HepG2 (cell line): ENCODE measurements at regions of chr22 and their contacts with region 1.

Region 1: DNA sequence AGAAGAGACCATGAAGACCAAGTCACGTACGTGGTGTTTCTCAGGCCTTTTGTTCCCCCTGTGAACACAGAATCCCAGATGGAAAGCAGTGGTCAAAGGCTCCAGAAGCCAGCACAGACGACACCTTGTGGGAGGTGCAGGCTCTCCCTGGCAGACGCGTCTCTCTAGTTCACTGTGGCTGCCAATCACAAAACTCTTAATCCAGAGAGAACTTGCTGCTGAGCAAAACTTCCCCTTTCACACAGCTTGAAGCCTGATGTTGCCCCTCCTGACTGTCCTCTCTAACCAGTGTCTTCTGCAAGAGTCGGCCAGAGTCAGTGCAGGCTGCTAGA is 67.1 kb downstream of the PIWIL3 start:
- DNase-seq: no peak
- ATAC-seq: peak; percentile 66
- H3K4me3 ChIP-seq: no peak overlapping the region
- H3K27ac ChIP-seq: no peak overlapping the region
- H3K4me1 ChIP-seq: peaks cover 17% of the 10 kb centered on the region
- H3K27me3 ChIP-seq: peaks cover 0 to 10% of the 10 kb centered on the region in 2 experiments; a peak in 2 of 5 replicates
- CTCF ChIP-seq: peak; percentile 52
- EP300 ChIP-seq: no peak
- POLR2A ChIP-seq: no peak
- RAD21 ChIP-seq: no peak

Region 2: GRCh38 chr22:24751518-24751917 is 44.1 kb after region 1 on chr22:
- CTCF ChIA-PET with region 1: interaction called, 4 read pairs
- POLR2A ChIA-PET with region 1: no interaction called
- in situ Hi-C with region 1: loop called (anchors 5 kb)
- intact Hi-C with region 1: no loop called
- DNase-seq: no peak
- ATAC-seq: no peak
- H3K4me3 ChIP-seq: no peak overlapping the region
- H3K27ac ChIP-seq: no peak overlapping the region
- H3K4me1 ChIP-seq: no peaks in the 10 kb centered on the region
- H3K27me3 ChIP-seq: peaks cover 0 to 22% of the 10 kb centered on the region in 2 experiments; a peak in 2 of 5 replicates
- CTCF ChIP-seq: no peak
- EP300 ChIP-seq: no peak
- POLR2A ChIP-seq: no peak
- RAD21 ChIP-seq: no peak

Region 3: GRCh38 chr22:24758164-24758799 is 50.8 kb after region 1 on chr22:
- CTCF ChIA-PET with region 1: interaction called, 18 read pairs
- POLR2A ChIA-PET with region 1: no interaction called
- in situ Hi-C with region 1: loop called (anchors 5 kb)
- intact Hi-C with region 1: loop called (anchors 1 kb)
- DNase-seq: peak; percentile 34
- ATAC-seq: no peak
- H3K4me3 ChIP-seq: no peak overlapping the region
- H3K27ac ChIP-seq: no peak overlapping the region
- H3K4me1 ChIP-seq: no peaks in the 10 kb centered on the region
- H3K27me3 ChIP-seq: peaks cover 1 to 31% of the 10 kb centered on the region in 2 experiments; a peak in 4 of 5 replicates
- CTCF ChIP-seq: peak; percentile 75
- EP300 ChIP-seq: no peak
- POLR2A ChIP-seq: no peak
- RAD21 ChIP-seq: peak; percentile 74